GM18951 (cell line): ENCODE measurements at regions of chr17 and their contacts with region 1.

Region 1: DNA sequence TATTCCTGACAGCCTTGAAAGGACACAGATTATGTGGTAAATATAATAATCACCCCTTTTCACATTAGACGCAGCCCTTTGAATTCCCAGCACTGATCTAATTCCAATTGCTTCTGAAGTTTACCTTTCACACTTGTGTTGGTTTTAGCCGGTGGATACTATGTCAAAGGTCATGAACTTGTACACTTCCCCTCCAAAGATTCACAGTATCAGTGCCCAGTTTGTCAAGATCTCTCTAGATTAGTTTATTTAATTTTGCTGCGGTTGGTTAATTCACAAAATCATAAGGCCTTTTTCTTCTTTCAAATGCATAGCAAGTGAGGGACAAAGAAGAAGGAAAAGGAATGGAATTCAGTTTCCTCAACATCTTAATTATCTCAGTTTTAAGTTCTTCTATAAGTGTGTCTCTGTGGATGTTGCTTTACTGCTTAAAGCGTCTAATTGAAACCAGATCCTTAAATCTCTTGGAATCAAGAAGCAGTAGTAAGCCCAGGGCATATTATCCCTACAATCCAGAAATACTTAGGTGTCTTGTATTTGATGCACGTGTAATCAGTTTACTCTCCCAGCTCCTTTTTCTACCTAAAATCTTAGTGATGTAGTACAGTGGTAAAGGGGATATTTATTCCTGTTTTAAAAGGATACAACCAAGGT is 174.3 kb upstream of the TBX2 start:
- POLR2A ChIP-seq: no peak

Region 2: GRCh38 chr17:60934415-60935122 is 290.8 kb before region 1 on chr17:
- in situ Hi-C with region 1: no loop called
- POLR2A ChIP-seq: no peak

Region 3: DNA sequence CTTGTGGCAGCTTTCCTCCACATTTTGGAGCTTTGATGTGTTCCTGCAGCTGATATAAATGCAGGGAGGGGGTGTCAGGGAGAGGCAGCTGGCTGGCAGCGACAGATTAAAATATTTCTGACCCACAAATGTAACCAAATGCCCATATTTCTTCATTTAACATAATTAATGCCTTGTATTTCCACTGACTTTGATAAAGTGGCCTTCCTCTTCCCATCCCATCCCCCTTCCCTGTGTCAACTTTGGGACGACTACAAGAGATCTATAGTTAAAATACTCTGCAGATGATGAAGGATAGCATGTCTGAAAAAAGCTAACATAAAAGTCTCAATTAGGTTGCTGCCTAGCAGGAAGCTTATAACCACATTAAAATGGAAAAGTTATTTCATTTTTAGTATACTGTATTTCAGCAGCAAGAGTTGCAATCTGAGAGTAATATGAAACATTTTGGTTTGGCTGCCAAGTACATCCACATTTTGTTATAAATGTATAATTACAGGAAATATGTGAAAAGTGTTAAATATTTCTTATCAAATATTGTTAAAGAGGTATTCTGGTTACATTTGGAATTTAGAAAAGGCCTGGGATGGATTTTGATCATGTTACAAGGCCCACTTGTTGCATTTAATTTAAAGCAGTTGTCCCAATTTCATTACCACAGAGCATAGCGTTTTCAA is 64.4 kb before region 1 on chr17:
- in situ Hi-C with region 1: loop called (anchors 5 kb)
- POLR2A ChIP-seq: no peak